ENCODE measurements at regions of chr11 and their contacts with region 1.

Region 1: DNA sequence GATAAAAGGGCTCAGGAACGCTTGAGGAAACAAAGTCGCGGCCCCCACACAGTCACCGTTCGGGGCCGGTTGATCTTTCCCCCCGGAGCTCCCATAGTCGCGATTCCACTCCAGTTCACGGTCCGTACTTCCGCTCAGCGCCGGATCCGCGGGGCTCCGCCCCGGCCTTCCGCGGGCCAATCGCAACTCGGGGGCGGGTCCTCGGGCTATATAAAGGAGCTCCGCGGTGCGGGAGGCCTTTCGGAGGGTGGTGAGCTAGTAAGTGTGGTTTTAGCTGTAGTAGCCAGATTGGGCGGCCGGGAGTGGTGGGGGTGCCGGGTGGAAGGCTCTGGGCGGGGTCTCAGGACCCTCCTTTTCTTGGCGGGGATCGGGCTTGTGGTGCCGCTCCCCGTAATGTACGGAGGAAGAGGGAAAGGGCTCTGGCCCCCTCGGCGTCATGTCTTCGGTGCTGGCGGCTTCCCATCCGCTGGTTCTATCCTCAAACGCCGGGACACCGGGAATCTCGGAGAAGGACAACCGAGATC is at the starts of genes C11orf98 and CSKMT:
- DNase-seq: peak; percentile 92 to 97 (median 94)
- ATAC-seq: peak; percentile 91
- H3K4me3 ChIP-seq: peak within 1 kb of the TSS; percentile 73
- H3K4me3 Mint-ChIP-seq: peak within 1 kb of the TSS; percentile 99
- H3K27ac ChIP-seq: peak within 1 kb of the TSS; percentile 80 to 88
- H3K27ac Mint-ChIP-seq: peak within 1 kb of the TSS; percentile 96
- H3K4me1 ChIP-seq: peaks cover 48% of the 10 kb centered on the region
- H3K4me1 Mint-ChIP-seq: peaks cover 36% of the 10 kb centered on the region
- H3K27me3 ChIP-seq: no peaks in the 10 kb centered on the region
- H3K27me3 Mint-ChIP-seq: no peaks in the 10 kb centered on the region
- CTCF ChIP-seq: no peak
- total RNA-seq, gene C11orf98: 14.3 to 18.5 TPM
- total RNA-seq, gene CSKMT: 17.8 to 18.8 TPM

Region 2: DNA sequence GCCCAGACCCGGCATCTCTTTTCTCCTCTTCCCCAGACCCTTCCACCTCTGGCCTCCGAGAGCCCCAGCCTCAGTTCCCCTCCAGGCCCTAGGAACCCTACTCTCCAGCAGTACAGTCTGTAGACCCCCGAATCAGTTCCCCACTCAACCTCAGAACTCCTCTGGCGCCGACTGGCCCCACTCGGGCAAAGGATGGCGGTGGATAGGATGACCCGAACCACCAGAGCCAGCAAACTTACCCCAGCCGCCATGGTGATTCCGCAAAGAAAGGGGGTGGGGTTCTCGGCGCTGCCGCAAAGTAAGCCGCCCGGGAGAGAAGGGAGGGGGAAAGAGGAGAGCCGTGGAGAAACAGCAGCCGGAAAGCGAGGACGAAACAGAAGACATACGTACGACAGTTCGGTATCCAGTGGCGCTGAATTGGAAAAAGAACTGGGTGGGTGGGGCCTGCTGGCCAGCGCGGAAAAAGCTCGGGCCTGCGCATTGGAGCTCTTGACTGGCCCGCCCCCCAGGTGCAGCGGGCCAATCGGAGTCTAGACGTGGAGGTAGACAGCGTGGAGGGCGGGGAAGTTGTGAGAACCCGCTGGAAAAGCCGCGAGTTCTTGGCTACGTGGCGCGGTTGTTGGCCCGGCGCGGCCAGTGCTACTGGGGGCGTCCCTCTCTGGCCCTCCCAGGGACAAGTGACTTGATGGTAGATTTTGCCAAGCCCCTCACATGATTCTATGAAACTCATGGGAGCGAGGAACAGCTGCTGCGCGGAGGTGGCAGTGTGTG is 91.4 kb before region 1 on chr11 and contains the start of gene EEF1G:
- CTCF ChIA-PET with region 1: no interaction called
- POLR2A ChIA-PET with region 1: interaction called, 24 read pairs
- intact Hi-C with region 1: no loop called
- DNase-seq: peak; percentile 95 to 100 (median 97)
- ATAC-seq: peak; percentile 94
- H3K4me3 ChIP-seq: peak within 1 kb of the TSS; percentile 82
- H3K4me3 Mint-ChIP-seq: peak within 1 kb of the TSS; percentile 93
- H3K27ac ChIP-seq: peak within 1 kb of the TSS; percentile 76 to 83
- H3K27ac Mint-ChIP-seq: peak within 1 kb of the TSS; percentile 89
- H3K4me1 ChIP-seq: peaks cover 48% of the 10 kb centered on the region
- H3K4me1 Mint-ChIP-seq: peaks cover 55% of the 10 kb centered on the region
- H3K27me3 ChIP-seq: no peaks in the 10 kb centered on the region
- H3K27me3 Mint-ChIP-seq: no peaks in the 10 kb centered on the region
- CTCF ChIP-seq: no peak
- total RNA-seq, gene EEF1G: 2,181 to 2,269 TPM

Region 3: GRCh38 chr11:62621567-62622470 is 43.3 kb before region 1 on chr11 and contains the start of gene B3GAT3:
- CTCF ChIA-PET with region 1: interaction called, 4 read pairs
- POLR2A ChIA-PET with region 1: interaction called, 66 read pairs
- intact Hi-C with region 1: loop called in 1 of 2 experiments (anchors 5 kb)
- DNase-seq: peak; percentile 91 to 99 (median 95)
- ATAC-seq: peak; percentile 82
- H3K4me3 ChIP-seq: peak within 1 kb of the TSS; percentile 69
- H3K4me3 Mint-ChIP-seq: peak within 1 kb of the TSS; percentile 95
- H3K27ac ChIP-seq: peak within 1 kb of the TSS; percentile 86 to 88
- H3K27ac Mint-ChIP-seq: peak within 1 kb of the TSS; percentile 89
- H3K4me1 ChIP-seq: peaks cover 32% of the 10 kb centered on the region
- H3K4me1 Mint-ChIP-seq: peaks cover 27% of the 10 kb centered on the region
- H3K27me3 ChIP-seq: no peaks in the 10 kb centered on the region
- H3K27me3 Mint-ChIP-seq: no peaks in the 10 kb centered on the region
- CTCF ChIP-seq: no peak
- total RNA-seq, gene B3GAT3: 47.2 to 49.5 TPM

Region 4: DNA sequence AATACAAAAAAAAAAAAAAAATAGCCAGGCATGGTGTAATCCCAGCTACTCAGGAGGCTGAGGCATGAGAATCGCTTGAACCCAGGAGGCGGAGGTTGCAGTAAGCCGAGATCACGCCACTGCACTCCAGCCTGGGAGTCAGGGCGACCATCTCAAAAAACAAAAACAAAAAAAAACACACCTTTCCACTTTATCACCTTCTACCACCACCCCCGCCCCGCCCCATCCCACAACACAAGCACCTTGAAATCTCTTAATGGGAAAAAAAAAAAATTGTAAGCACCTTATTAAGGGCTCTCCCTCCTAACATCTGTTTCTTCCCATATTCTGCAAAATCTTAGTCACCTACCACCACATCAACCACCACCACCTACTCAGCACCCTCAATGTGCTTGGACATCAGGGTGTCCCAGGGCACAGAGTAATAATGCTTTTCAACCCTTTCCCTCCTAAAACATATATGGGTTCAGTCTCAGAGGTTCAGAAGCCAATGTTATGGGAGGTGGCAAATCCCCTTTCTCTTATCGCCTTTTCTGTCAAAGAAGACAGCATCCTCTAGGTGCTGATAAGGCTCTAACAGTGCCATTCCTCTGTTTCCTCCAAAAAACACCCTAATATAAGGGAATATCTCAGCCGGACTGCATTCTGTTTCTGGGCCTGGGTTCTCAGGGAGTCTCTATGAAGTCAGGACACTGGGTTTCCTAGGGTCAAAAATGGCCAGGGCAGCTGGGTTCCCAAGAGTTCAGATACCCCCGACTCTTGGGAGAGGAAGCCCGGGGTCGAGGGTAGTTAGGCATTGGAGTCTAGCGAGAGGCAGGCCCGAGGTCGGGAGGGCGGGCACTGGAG is 12.8 kb before region 1 on chr11:
- CTCF ChIA-PET with region 1: interaction called, 6 read pairs
- POLR2A ChIA-PET with region 1: interaction called, 170 read pairs
- intact Hi-C with region 1: loop called (anchors 1 kb)
- DNase-seq: peak in 4 of 14 experiments; percentile 43 to 62 (median 51)
- ATAC-seq: peak; percentile 5
- H3K4me3 ChIP-seq: peak overlapping the region; percentile 96
- H3K4me3 Mint-ChIP-seq: peak overlapping the region; percentile 94
- H3K27ac ChIP-seq: peak overlapping the region; percentile 89 to 94
- H3K27ac Mint-ChIP-seq: peak overlapping the region; percentile 97
- H3K4me1 ChIP-seq: peaks cover 28% of the 10 kb centered on the region
- H3K4me1 Mint-ChIP-seq: peaks cover 17% of the 10 kb centered on the region
- H3K27me3 ChIP-seq: no peaks in the 10 kb centered on the region
- H3K27me3 Mint-ChIP-seq: no peaks in the 10 kb centered on the region
- CTCF ChIP-seq: no peak

Region 5: GRCh38 chr11:62753736-62754603 is 88.8 kb after region 1 on chr11 and contains the start of gene ZBTB3:
- CTCF ChIA-PET with region 1: no interaction called
- POLR2A ChIA-PET with region 1: interaction called, 30 read pairs
- intact Hi-C with region 1: no loop called
- DNase-seq: peak; percentile 92 to 100 (median 97)
- ATAC-seq: peak; percentile 93
- H3K4me3 ChIP-seq: peak within 1 kb of the TSS; percentile 80
- H3K4me3 Mint-ChIP-seq: peak within 1 kb of the TSS; percentile 93
- H3K27ac ChIP-seq: peak within 1 kb of the TSS; percentile 84 to 88
- H3K27ac Mint-ChIP-seq: peak within 1 kb of the TSS; percentile 89
- H3K4me1 ChIP-seq: peaks cover 41% of the 10 kb centered on the region
- H3K4me1 Mint-ChIP-seq: peaks cover 35% of the 10 kb centered on the region
- H3K27me3 ChIP-seq: no peaks in the 10 kb centered on the region
- H3K27me3 Mint-ChIP-seq: no peaks in the 10 kb centered on the region
- CTCF ChIP-seq: no peak
- total RNA-seq, gene ZBTB3: 2.3 to 3.5 TPM

Region 6: DNA sequence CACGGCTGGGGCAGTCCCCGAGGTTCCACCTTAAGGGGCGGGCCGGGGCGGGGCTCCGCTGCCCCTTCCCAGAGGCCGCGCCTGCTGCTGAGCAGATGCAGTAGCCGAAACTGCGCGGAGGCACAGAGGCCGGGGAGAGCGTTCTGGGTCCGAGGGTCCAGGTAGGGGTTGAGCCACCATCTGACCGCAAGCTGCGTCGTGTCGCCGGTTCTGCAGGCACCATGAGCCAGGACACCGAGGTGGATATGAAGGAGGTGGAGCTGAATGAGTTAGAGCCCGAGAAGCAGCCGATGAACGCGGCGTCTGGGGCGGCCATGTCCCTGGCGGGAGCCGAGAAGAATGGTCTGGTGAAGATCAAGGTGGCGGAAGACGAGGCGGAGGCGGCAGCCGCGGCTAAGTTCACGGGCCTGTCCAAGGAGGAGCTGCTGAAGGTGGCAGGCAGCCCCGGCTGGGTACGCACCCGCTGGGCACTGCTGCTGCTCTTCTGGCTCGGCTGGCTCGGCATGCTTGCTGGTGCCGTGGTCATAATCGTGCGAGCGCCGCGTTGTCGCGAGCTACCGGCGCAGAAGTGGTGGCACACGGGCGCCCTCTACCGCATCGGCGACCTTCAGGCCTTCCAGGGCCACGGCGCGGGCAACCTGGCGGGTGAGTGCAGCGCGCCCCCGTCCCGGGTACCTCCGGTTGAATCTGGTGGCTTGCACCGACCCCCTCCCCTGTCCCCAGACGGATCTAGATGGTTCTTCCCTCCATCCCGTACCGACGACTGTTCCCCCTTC is 215.9 kb after region 1 on chr11 and contains the start of gene SLC3A2:
- CTCF ChIA-PET with region 1: no interaction called
- POLR2A ChIA-PET with region 1: interaction called, 12 read pairs
- intact Hi-C with region 1: no loop called
- DNase-seq: peak; percentile 61 to 94 (median 82)
- ATAC-seq: peak; percentile 74
- H3K4me3 ChIP-seq: peak within 1 kb of the TSS; percentile 99
- H3K4me3 Mint-ChIP-seq: peak within 1 kb of the TSS; percentile 93
- H3K27ac ChIP-seq: peak within 1 kb of the TSS; percentile 95 to 98
- H3K27ac Mint-ChIP-seq: peak within 1 kb of the TSS; percentile 100
- H3K4me1 ChIP-seq: peaks cover 47% of the 10 kb centered on the region
- H3K4me1 Mint-ChIP-seq: peaks cover 52% of the 10 kb centered on the region
- H3K27me3 ChIP-seq: no peaks in the 10 kb centered on the region
- H3K27me3 Mint-ChIP-seq: no peaks in the 10 kb centered on the region
- CTCF ChIP-seq: peak; percentile 86
- total RNA-seq, gene SLC3A2: 231 to 234 TPM

Measured in CD4-positive, alpha-beta T cell (primary cell).